ENCODE measurements at regions of chr6 and their contacts with region 1.

Region 1: DNA sequence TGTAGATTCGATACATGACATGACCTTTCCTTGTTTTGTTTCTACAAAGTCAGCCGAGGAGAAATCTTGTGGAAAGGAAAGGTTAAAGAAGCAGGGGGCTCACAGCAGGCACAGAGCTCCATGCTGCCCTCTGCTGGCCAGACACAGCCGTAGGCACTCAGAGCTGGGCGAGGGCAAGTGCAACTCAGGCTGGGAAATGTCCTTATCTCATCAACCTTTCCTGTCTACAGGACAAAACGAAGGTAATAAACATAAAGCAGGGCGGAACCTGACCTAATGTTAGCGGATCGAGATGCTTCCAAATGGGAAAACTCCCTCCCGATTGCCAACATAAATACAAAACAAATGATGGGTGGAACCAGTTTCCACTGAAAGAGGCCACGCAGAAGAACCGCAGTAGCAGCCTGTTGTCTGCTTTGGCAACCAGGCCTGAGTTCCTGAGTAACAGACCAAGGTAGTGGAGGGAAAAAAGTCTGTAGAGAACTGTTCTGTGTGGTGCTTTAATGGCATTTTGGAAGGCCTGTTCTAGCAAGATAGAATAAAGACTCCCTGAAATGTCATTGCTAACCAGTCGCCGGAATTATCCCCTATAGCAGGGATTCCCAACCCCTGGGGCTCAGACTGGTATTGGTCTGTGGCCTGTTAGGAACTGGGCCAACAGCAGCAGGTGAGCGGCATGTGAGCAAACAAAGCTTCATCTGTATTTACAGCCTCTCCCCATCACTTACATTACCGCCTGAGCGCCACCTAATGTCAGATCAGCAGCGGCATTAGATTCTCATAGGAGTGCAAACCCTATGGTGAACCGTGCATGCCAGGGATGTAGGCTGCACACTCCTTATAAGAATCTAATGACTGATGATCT is 85.2 kb downstream of the MBOAT1 start:
- H3K4me3 ChIP-seq: no peak overlapping the region
- H3K27ac ChIP-seq: peak overlapping the region; percentile 49
- H3K4me1 ChIP-seq: peaks cover 7% of the 10 kb centered on the region
- CTCF ChIP-seq: peak; percentile 81

Region 2: GRCh38 chr6:20069021-20069522 is 57.9 kb before region 1 on chr6:
- CTCF ChIA-PET with region 1: interaction called, 13 read pairs
- POLR2A ChIA-PET with region 1: no interaction called
- H3K4me3 ChIP-seq: no peak overlapping the region
- H3K27ac ChIP-seq: no peak overlapping the region
- H3K4me1 ChIP-seq: no peaks in the 10 kb centered on the region
- CTCF ChIP-seq: no peak

Region 3: DNA sequence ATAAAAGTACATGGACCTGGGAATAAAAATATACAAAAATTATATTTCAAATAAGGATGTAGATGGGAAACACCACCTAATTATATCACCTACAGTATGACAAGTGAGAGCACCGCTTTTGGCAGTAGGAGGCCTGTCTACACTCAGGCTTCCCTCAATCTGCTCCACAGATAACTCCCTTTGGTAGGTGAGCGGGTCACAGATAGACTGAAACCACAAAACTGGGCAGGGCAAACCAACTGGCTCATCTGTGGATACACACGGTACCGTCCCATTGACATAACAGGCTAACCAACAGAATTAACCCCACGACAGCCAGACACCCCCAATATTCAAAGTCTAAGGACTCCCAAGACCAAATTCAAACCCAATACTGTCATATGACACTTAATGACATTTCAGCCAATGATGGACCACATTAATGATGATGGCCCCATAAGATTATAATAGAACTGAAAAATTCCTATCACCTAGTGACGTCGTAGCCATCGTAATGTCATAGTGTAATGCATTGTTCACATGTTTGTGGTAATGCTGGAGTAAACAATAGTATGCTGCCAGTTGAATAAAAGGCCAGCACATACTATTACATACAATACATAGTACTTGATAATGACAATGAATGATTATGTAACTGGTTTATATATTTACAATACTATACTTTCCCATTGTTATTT is 24.5 kb before region 1 on chr6:
- CTCF ChIA-PET with region 1: interaction called, 153 read pairs
- POLR2A ChIA-PET with region 1: no interaction called
- H3K4me3 ChIP-seq: no peak overlapping the region
- H3K27ac ChIP-seq: no peak overlapping the region
- H3K4me1 ChIP-seq: no peaks in the 10 kb centered on the region
- CTCF ChIP-seq: no peak

Region 4: DNA sequence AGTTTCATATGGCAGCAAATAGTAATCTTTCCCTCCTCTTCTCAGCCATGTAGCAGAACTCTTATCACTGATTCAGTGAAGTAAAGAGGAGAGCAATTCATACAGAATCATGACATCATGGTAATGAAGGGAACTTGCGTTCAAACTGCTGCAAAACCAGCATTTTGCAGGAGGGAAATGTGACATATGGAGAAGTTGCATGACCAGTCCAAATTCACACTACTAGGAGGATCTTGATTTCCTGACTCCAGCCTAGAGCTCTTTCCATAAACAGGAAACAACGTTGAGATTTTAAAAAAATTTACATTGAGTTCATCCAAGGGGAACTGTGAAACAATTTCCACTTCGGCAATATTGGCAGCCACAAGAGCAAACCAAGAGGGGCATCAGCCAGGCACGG is 21.4 kb after region 1 on chr6:
- CTCF ChIA-PET with region 1: interaction called, 12 read pairs
- POLR2A ChIA-PET with region 1: no interaction called
- H3K4me3 ChIP-seq: no peak overlapping the region
- H3K27ac ChIP-seq: no peak overlapping the region
- H3K4me1 ChIP-seq: no peaks in the 10 kb centered on the region
- CTCF ChIP-seq: no peak

Region 5: GRCh38 chr6:20188630-20189075 is 61.6 kb after region 1 on chr6:
- CTCF ChIA-PET with region 1: interaction called, 15 read pairs
- POLR2A ChIA-PET with region 1: no interaction called
- H3K4me3 ChIP-seq: no peak overlapping the region
- H3K27ac ChIP-seq: no peak overlapping the region
- H3K4me1 ChIP-seq: no peaks in the 10 kb centered on the region
- CTCF ChIP-seq: no peak

Measured in HEK293 (cell line).